Activated naive CD4-positive, alpha-beta T cell treated with anti-CD3 and anti-CD28 coated beads, Interleukin-2, amount 10 ng/mL, durations not matched to agents 7 days and 5 days (primary cell): ENCODE measurements at regions of chr10 and their contacts with region 1.

Region 1: GRCh38 chr10:112140110-112140970 is 43.2 kb downstream of the GPAM start:
- DNase-seq: peak; percentile 85
- H3K4me3 Mint-ChIP-seq: no peak overlapping the region
- H3K27ac Mint-ChIP-seq: no peak overlapping the region
- H3K4me1 Mint-ChIP-seq: no peaks in the 10 kb centered on the region
- H3K27me3 Mint-ChIP-seq: peaks cover 29% of the 10 kb centered on the region

Region 2: DNA sequence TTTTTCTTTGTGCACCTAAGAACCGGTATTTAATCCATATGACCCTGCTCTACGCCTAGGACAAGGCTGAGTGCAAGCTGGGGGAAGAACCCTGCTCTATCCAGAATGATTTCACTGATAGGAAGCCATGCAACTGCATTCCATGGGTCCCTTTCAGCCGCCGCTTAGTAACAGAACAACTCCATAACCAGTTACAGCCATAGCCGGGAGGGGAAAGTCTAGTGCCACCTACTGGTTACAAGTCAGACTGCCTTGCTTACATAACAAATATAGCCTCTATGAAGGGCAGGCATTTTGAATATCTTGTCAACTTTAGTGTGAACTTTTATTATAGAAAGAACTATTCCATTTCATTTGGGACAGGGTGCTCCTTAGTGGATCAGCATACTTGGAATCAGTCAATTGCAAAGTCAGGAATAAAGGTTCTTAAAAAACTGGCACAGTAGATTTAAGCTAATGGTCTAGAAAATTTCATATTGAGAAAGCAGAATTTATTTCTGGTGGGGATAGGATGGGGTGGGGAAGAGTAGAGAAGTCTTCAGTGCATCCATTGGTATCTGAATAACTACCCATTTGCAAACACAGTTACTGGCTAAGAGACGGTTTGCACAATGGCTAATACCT is 541.8 kb before region 1 on chr10:
- CTCF ChIA-PET with region 1: no interaction called
- DNase-seq: peak; percentile 62
- H3K4me3 Mint-ChIP-seq: no peak overlapping the region
- H3K27ac Mint-ChIP-seq: no peak overlapping the region
- H3K4me1 Mint-ChIP-seq: no peaks in the 10 kb centered on the region
- H3K27me3 Mint-ChIP-seq: no peaks in the 10 kb centered on the region

Region 3: GRCh38 chr10:111756217-111757061 is 383.9 kb before region 1 on chr10:
- CTCF ChIA-PET with region 1: interaction called, 11 read pairs
- DNase-seq: peak; percentile 20
- H3K4me3 Mint-ChIP-seq: no peak overlapping the region
- H3K27ac Mint-ChIP-seq: no peak overlapping the region
- H3K4me1 Mint-ChIP-seq: no peaks in the 10 kb centered on the region
- H3K27me3 Mint-ChIP-seq: no peaks in the 10 kb centered on the region

Region 4: DNA sequence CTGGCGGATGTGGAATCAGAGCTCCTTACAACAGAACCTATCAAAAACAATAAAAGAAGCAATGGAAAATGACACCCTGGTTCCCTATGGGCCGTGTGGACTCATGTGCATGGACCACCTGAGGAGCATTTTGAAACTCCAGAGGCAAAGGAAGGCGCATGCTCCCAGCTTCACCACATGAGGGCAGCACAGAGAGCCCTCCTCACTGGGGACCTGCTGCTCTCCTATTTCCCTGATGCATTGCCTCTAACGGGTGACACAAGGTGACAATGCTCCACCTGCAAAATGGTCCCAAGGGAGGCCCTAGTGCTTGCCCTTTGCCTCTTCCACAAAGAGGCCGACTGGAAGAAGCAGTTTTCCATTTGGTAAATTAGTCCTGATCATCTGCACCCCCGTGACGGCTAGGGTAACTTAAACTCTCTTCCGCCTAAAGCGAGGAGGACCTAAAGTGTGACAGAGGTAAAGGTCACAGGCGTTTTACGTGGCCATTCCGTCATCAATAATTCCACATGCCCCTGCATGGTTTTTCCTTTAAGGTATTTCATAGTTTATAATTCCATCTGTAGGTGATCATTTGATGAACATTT is 24.4 kb before region 1 on chr10:
- CTCF ChIA-PET with region 1: interaction called, 78 read pairs
- DNase-seq: peak; percentile 63
- H3K4me3 Mint-ChIP-seq: no peak overlapping the region
- H3K27ac Mint-ChIP-seq: no peak overlapping the region
- H3K4me1 Mint-ChIP-seq: no peaks in the 10 kb centered on the region
- H3K27me3 Mint-ChIP-seq: no peaks in the 10 kb centered on the region

Region 5: DNA sequence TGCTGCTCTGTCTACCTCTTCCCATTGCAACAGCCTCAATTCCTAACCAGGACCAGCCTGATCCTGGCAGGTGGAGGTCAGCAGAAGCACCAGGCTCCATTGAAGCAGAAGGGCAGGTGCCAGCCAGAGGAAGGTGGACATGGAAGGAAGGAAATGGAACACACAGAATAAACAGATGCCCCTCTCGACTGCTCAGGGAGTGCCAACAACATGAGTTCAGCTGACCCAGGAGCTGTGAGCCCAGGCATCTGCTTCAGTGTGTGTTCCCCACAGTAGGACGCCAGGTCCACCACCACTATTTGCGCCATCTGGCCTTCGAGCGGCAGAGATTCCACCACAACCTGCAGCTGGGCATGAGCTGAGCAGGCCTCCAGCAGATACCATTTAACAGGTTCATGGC is 13.4 kb before region 1 on chr10:
- CTCF ChIA-PET with region 1: interaction called, 13 read pairs
- DNase-seq: no peak
- H3K4me3 Mint-ChIP-seq: no peak overlapping the region
- H3K27ac Mint-ChIP-seq: no peak overlapping the region
- H3K4me1 Mint-ChIP-seq: no peaks in the 10 kb centered on the region
- H3K27me3 Mint-ChIP-seq: peaks cover under 1% of the 10 kb centered on the region

Region 6: GRCh38 chr10:112151524-112152039 is 11.2 kb after region 1 on chr10:
- CTCF ChIA-PET with region 1: interaction called, 27 read pairs
- DNase-seq: no peak
- H3K4me3 Mint-ChIP-seq: no peak overlapping the region
- H3K27ac Mint-ChIP-seq: no peak overlapping the region
- H3K4me1 Mint-ChIP-seq: no peaks in the 10 kb centered on the region
- H3K27me3 Mint-ChIP-seq: no peaks in the 10 kb centered on the region

Region 7: GRCh38 chr10:112209684-112210131 is 69.4 kb after region 1 on chr10:
- CTCF ChIA-PET with region 1: no interaction called
- DNase-seq: no peak
- H3K4me3 Mint-ChIP-seq: no peak overlapping the region
- H3K27ac Mint-ChIP-seq: no peak overlapping the region
- H3K4me1 Mint-ChIP-seq: no peaks in the 10 kb centered on the region
- H3K27me3 Mint-ChIP-seq: peaks cover 12% of the 10 kb centered on the region